Activated B cell treated with CpG ODN at 0.5 μM for 24 hours (primary cell): ENCODE measurements at regions of chr9 and their contacts with region 1.

Region 1: GRCh38 chr9:99189887-99190596 is 31.7 kb downstream of the ALG2 start:
- DNase-seq: no peak
- ATAC-seq: no peak
- H3K4me3 Mint-ChIP-seq: peak overlapping the region; percentile 21
- H3K27ac Mint-ChIP-seq: no peak overlapping the region
- H3K4me1 Mint-ChIP-seq: peaks cover 56% of the 10 kb centered on the region
- H3K27me3 Mint-ChIP-seq: peaks cover 2% of the 10 kb centered on the region
- CTCF ChIP-seq: no peak

Region 2: DNA sequence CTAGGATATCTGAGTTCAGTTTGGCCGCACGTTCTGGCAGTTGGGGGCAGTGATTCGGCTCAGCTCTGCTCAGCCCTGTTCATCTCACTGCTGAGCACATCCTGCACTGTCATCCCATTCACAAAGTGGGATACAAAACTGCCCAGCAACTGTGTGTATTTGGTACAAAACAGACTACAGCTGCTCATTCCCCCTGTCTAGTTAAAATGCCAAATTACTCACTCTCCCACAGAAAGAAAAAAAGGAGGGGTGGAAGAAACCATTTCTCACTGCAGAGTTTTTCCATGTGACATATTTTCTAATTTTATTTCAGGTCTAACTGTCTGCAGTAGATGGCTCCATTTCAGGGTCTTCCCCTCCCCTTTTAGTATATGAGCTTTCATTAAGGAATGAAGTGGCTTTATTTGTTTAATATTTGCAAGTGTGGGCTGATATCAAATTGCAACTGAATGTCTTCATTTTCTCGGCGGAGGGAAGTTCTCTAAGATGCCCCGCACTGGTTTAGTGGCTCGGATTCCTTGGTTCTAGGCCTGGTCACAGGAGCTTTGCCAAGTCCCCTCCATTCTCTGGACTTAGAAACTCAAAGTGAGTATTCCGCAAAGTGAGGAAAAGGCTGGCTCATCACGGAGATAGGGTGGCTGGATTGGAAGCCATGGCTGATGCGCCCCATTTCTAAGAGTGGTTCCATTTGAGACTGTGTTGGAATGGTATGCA is 231.6 kb before region 1 on chr9:
- CTCF ChIA-PET with region 1: no interaction called
- POLR2A ChIA-PET with region 1: no interaction called
- intact Hi-C with region 1: no loop called
- DNase-seq: no peak
- ATAC-seq: no peak
- H3K4me3 Mint-ChIP-seq: no peak overlapping the region
- H3K27ac Mint-ChIP-seq: no peak overlapping the region
- H3K4me1 Mint-ChIP-seq: no peaks in the 10 kb centered on the region
- H3K27me3 Mint-ChIP-seq: peaks cover 22% of the 10 kb centered on the region
- CTCF ChIP-seq: no peak

Region 3: DNA sequence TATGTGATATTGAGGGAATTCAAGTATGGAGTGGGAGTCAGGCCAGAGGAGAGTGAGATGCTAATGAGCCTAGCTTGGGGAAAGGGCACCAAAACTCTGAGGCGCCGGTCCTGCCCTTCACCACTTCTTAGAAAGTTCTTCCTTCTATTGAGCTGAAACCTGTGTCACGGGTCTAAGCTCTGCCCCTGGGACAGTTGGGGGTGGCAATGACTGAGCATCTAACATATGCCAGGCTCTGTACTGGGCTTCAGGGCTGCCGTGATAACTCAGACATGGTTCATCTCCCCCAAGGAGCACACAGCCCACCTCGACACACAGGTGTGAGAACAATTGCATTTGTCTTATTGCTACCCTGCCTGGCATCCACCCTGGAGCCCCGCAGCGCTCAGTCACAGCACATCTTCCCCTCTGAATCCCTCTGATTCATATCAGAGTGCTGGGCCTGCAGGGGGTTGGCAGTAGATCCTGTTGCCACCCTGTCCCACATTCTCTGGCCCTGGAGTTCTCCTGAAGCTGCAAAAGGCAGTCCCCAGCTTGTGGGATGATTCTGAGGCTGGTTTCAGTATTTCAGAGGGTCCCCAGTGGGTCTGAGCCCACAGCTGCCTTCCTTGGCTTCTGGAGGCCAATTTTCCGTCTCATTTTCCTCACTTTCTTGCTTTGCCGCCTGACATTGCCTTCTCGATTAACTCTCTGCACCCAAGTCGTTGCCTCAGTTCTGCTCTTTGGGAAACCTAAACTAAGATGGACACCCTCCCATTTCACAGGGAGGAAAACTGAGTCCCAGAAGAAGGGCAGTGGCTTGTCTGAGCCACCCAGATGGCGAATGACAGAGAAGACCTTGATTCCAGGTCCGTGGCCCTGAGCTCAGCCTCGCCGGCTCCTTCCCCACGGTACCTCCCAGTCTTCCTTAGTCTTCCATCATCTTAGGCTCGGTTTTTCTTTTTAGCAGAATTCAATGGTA is 10.8 kb before region 1 on chr9:
- CTCF ChIA-PET with region 1: interaction called, 32 read pairs
- POLR2A ChIA-PET with region 1: interaction called, 15 read pairs
- intact Hi-C with region 1: no loop called
- DNase-seq: no peak
- ATAC-seq: peak; percentile 23
- H3K4me3 Mint-ChIP-seq: peak overlapping the region; percentile 2
- H3K27ac Mint-ChIP-seq: peak overlapping the region; percentile 86
- H3K4me1 Mint-ChIP-seq: peaks cover 87% of the 10 kb centered on the region
- H3K27me3 Mint-ChIP-seq: no peaks in the 10 kb centered on the region
- CTCF ChIP-seq: no peak

Region 4: GRCh38 chr9:99274495-99274894 is 84.5 kb after region 1 on chr9:
- CTCF ChIA-PET with region 1: no interaction called
- POLR2A ChIA-PET with region 1: no interaction called
- intact Hi-C with region 1: no loop called
- DNase-seq: no peak
- ATAC-seq: no peak
- H3K4me3 Mint-ChIP-seq: no peak overlapping the region
- H3K27ac Mint-ChIP-seq: no peak overlapping the region
- H3K4me1 Mint-ChIP-seq: no peaks in the 10 kb centered on the region
- H3K27me3 Mint-ChIP-seq: no peaks in the 10 kb centered on the region
- CTCF ChIP-seq: no peak

Region 5: GRCh38 chr9:99357575-99357974 is 167.5 kb after region 1 on chr9:
- CTCF ChIA-PET with region 1: no interaction called
- POLR2A ChIA-PET with region 1: no interaction called
- intact Hi-C with region 1: no loop called
- DNase-seq: no peak
- ATAC-seq: no peak
- H3K4me3 Mint-ChIP-seq: no peak overlapping the region
- H3K27ac Mint-ChIP-seq: no peak overlapping the region
- H3K4me1 Mint-ChIP-seq: no peaks in the 10 kb centered on the region
- H3K27me3 Mint-ChIP-seq: peaks cover 33% of the 10 kb centered on the region
- CTCF ChIP-seq: no peak